ENCODE measurements at regions of chr20 and their contacts with region 1.

Region 1: GRCh38 chr20:49508435-49509199 is 26.1 kb upstream of the KCNB1 start:
- DNase-seq: no peak
- ATAC-seq: no peak
- H3K4me3 ChIP-seq: no peak overlapping the region
- H3K27ac ChIP-seq: peak overlapping the region in 1 of 12 donors; percentile 69
- H3K4me1 ChIP-seq: peaks cover 0 to 20% (median 3%) of the 10 kb centered on the region in 12 donors
- H3K27me3 ChIP-seq: peaks cover 0 to 16% (median 0%) of the 10 kb centered on the region in 9 donors
- CTCF ChIP-seq: peak; percentile 33 to 67 (median 51)
- POLR2A ChIP-seq: no peak

Region 2: DNA sequence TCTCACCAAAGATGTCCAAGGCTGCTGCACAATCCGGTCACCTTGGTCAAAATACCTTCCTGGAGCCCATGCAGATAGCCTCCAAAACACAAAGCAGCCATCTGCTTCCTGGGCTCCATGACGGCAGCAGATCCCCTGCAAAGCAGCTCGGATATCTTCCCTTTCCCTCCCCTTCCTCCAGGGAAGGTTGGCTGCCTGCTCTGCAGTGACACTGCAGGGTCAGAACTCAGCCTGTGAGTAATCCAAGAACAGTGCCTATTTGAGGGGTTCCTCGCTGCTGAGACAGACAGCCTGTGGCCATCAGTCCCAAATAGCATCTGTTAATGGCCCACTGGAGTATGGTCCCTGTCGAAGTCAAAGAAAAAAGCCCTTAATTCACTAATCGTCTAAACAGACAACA is 951.7 kb before region 1 on chr20:
- intact Hi-C with region 1: no loop called
- DNase-seq: no peak
- ATAC-seq: no peak
- H3K4me3 ChIP-seq: no peak overlapping the region
- H3K27ac ChIP-seq: no peak overlapping the region
- H3K4me1 ChIP-seq: no peaks in the 10 kb centered on the region
- H3K27me3 ChIP-seq: peaks cover 0 to 3% (median 0%) of the 10 kb centered on the region in 9 donors
- CTCF ChIP-seq: no peak
- POLR2A ChIP-seq: no peak

Region 3: DNA sequence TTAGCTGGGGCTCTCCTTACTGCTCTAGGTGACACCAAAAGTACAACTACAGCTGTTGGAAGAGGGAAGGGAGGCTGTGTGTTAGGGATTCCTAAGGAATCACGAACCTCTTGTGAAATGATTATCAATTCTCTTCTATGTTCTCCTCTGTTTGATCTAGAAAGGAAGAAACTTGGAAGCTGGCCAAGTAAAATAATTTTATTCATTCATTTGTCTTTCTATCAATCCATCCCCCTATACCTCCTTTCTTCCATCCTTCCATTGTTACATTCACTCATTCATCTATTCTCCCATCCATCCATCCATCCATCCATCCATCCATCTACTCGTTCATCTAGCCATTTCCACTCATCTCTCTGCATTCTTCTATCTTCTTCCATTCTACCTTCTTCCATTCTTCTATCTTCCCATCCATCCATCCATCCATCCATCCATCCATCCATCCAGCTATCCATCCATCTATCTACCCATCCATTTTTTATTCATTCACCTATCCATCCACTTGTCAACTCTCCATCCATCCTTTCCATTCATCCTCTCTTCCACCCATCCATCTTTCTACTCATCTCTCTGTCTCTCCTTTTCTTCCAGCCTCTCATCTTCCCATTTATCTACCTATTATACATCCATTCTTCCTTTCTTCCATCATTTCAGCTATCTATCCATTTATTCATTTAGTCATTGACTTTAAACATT is 177.9 kb before region 1 on chr20:
- intact Hi-C with region 1: loop called in 7 of 10 experiments (anchors 1 to 5 kb)
- DNase-seq: no peak
- ATAC-seq: no peak
- H3K4me3 ChIP-seq: no peak overlapping the region
- H3K27ac ChIP-seq: no peak overlapping the region
- H3K4me1 ChIP-seq: no peaks in the 10 kb centered on the region
- H3K27me3 ChIP-seq: peaks cover 0 to 28% (median 7%) of the 10 kb centered on the region in 9 donors
- CTCF ChIP-seq: no peak
- POLR2A ChIP-seq: no peak

Region 4: DNA sequence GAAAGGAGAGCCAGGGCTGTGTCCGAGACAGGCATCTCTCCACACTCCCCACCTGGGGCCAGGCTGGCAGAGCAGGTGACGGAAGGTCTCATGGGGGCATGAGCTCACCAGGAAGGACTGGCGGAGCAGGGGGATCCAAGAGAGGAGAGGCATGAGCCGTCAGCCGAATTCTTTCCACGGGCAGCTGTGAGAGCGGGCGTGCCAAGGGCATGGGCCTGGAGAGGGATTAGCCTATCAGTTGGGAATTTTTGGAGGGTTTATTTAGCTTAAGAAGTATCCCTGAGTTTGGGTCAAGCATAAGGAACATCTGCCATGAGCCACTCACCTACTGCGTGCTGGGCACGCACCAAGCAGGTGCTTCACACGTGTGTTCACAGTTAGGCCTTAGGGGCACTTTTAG is 170.6 kb before region 1 on chr20:
- intact Hi-C with region 1: loop called in 8 of 10 experiments (anchors 1 to 5 kb)
- DNase-seq: no peak
- ATAC-seq: no peak
- H3K4me3 ChIP-seq: no peak overlapping the region
- H3K27ac ChIP-seq: no peak overlapping the region
- H3K4me1 ChIP-seq: no peaks in the 10 kb centered on the region
- H3K27me3 ChIP-seq: peaks cover 0 to 7% (median 0%) of the 10 kb centered on the region in 9 donors
- CTCF ChIP-seq: no peak
- POLR2A ChIP-seq: no peak

Region 5: DNA sequence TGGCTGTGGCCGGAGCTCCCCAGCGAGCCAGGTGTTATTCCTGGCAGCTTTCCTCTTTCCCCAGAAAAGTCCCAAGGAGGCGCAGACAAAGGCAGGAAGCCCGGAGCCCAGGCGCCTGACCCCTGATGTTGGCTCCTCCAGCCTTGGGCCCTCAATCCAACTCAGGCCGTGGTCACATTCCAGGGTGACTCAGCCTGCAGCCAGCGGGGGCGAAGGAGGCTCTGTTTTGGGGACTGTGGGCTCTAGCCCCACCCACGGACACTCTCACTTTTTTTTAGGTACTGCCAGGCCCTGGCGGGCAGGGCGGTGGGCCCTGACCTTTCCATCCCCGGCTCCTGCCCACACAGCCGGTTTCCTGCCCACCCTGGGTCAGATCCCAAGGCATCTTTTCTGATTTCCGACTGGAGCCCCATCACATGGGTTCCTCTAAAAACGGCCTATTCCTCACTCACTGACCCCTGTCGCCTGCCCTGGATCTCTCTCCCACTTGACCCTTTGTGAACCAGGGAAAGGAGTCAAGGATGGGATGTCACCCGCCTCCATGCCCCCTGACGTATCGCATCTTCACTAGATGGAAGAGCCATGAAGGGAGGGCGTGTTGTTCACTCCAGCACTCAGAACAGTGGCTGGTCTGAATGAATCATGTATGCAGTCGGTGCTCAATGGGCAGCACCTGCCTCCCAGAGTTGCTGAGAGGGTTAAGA is 53.8 kb after region 1 on chr20:
- intact Hi-C with region 1: no loop called
- DNase-seq: peak; percentile 84 to 88 (median 86)
- ATAC-seq: peak; percentile 53 to 97 (median 93)
- H3K4me3 ChIP-seq: peak overlapping the region in 2 of 12 donors; percentile 6 to 10
- H3K27ac ChIP-seq: peak overlapping the region; percentile 36 to 87 (median 68)
- H3K4me1 ChIP-seq: peaks cover 1 to 56% (median 19%) of the 10 kb centered on the region in 12 donors
- H3K27me3 ChIP-seq: peaks cover 0 to 11% (median 3%) of the 10 kb centered on the region in 9 donors
- CTCF ChIP-seq: no peak
- POLR2A ChIP-seq: no peak

Measured in heart left ventricle (tissue), 16 donors.